CD4-positive, alpha-beta memory T cell (primary cell): ENCODE measurements at regions of chr15 and their contacts with region 1.

Region 1: DNA sequence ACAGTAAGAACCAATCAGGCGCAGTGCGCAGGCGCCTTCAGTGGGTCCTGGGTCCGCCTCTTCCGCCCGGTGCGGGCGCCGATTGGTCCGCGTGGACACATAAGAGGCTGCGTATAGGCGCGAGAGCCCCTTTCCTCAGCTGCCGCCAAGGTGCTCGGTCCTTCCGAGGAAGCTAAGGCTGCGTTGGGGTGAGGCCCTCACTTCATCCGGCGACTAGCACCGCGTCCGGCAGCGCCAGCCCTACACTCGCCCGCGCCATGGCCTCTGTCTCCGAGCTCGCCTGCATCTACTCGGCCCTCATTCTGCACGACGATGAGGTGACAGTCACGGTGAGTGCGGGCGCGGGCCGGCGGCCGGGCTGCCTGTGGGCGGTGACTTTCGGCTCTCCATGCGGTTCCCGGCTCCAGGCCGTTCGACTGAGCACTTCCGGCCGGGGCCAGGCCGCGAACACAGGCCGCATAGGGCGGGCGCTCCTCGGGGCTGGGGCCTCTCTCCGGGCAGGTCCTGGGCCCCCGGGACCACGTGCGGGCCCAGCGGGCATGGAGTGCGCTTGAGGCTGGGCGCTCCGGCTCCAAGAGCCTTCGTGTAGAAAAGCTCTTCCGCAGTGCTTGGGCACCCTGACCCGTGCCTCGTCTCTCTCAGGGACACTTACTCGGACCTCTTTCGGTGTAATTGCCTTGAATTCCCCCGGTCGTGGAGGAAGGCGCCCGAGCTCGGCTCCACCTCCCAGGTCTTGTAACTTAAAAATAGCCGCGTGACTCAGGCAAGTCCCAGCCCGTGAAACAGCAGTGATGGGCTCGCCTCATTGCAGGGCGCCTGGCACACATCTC is at the start of gene RPLP1:
- DNase-seq: peak; percentile 96
- H3K4me3 ChIP-seq: peak within 1 kb of the TSS; percentile 78 to 91
- H3K4me3 Mint-ChIP-seq: peak within 1 kb of the TSS; percentile 94 to 100 (median 98)
- H3K27ac ChIP-seq: peak within 1 kb of the TSS; percentile 92
- H3K27ac Mint-ChIP-seq: peak within 1 kb of the TSS; percentile 94 to 99 (median 98)
- H3K4me1 ChIP-seq: peaks cover 36% of the 10 kb centered on the region
- H3K4me1 Mint-ChIP-seq: peaks cover 28 to 56% (median 37%) of the 10 kb centered on the region in 4 donors
- H3K27me3 ChIP-seq: no peaks in the 10 kb centered on the region
- H3K27me3 Mint-ChIP-seq: no peaks in the 10 kb centered on the region
- total RNA-seq, gene RPLP1: 2,753 to 2,900 TPM

Region 2: GRCh38 chr15:69058830-69059556 is 393.9 kb before region 1 on chr15:
- CTCF ChIA-PET with region 1: interaction called, 4 read pairs
- POLR2A ChIA-PET with region 1: no interaction called
- intact Hi-C with region 1: loop called (anchors 1 kb)
- DNase-seq: peak; percentile 59 to 66 (median 62)
- H3K4me3 ChIP-seq: no peak overlapping the region
- H3K4me3 Mint-ChIP-seq: peak overlapping the region in 5 of 8 donors; percentile 40 to 62 (median 56)
- H3K27ac ChIP-seq: no peak overlapping the region
- H3K27ac Mint-ChIP-seq: peak overlapping the region in 5 of 7 donors; percentile 19 to 81 (median 27)
- H3K4me1 ChIP-seq: peaks cover 34% of the 10 kb centered on the region
- H3K4me1 Mint-ChIP-seq: peaks cover 23 to 43% (median 31%) of the 10 kb centered on the region in 4 donors
- H3K27me3 ChIP-seq: no peaks in the 10 kb centered on the region
- H3K27me3 Mint-ChIP-seq: peaks cover 4 to 8% of the 10 kb centered on the region in 2 donors

Region 3: DNA sequence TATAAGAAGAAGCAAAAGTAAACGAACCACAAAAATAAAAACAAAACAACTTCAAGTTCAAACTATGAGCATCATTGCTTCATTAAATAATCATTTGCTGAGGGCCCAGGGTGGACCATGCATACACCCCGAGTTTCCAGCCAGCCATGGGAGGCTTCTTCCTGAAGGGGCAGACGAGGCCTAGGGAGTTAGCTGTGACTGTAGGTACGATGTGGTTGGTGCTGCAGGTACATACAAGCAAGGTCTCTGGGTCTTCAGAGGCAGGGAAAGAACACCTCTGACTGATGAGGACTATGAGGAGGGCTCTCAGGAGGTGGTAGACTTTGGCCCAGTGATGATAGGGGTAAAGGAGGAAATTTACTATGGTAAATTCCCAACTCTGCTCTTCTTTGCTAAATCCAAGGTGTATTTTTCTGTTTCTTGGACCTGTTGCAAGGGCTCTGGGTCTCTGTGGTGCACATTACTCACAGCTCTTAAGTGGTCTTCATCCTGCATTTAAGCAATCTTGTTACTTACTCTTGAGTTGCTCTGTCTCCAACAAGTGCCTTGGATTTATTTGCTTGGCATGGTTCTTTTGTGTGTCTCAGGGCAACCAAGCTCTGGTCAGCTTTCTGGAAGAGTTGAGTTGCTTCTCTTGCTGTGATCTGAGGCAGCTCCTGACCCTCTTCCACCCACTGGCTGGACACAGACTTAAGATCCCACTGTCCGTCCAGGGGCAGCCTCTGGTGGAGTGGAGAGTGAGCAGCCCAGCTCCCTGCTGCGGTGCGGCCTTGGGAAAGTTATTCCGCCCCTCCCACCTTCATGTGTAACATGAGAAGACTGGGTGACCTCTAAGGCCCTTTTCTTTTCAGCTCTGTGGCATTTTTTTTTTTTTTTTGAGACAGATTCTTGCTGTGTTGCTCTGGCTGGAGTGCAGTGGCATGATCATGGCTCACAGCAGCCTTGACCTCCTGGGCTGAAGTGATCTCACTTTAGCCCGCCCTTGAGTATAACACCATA is 94.8 kb before region 1 on chr15:
- CTCF ChIA-PET with region 1: no interaction called
- POLR2A ChIA-PET with region 1: no interaction called
- intact Hi-C with region 1: no loop called
- DNase-seq: no peak
- H3K4me3 ChIP-seq: no peak overlapping the region
- H3K4me3 Mint-ChIP-seq: no peak overlapping the region
- H3K27ac ChIP-seq: no peak overlapping the region
- H3K27ac Mint-ChIP-seq: no peak overlapping the region
- H3K4me1 ChIP-seq: no peaks in the 10 kb centered on the region
- H3K4me1 Mint-ChIP-seq: no peaks in the 10 kb centered on the region
- H3K27me3 ChIP-seq: no peaks in the 10 kb centered on the region
- H3K27me3 Mint-ChIP-seq: peaks cover 1 to 12% of the 10 kb centered on the region in 2 donors

Region 4: DNA sequence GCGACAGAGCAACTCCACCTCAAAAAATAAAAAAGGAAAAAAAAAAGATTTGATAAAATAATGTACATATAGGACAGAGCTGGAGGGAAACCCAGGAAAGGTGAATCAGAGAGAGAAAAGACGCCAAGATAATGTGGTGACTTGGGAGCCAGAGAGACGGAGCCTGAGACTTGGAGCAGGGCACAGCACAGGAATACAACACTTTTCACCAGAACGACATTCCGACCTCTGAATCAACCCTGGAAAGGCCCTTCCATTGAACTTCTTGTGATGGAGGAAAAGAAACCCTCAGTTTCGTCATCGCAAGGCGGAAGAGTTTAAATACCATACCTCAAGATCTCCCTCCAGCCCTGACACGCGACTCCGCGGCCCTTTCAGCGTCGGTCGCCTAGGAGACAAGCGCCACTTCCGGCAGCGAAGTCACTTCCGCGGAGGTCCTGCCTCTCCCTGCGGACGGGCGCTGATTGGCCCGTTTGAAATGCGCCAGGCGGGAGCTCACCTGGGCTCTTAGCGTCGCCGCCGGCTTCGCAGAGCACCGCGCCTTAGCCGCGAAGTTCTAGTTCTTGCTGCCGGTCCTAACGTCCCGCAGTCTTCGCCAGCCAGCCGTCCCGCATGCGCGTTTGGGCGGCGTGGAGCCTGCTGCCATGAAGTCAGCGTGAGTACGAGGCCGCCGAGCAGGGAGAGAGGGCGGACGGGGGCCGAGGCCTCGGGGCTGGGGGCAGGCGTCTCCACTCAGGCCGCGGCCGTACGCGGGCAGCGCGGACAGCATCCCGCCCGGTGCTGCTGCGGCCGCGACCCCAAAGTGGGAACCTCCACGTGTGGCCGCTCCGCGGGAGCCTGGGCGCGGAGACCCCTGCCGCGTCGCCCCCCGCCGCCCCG is 38.8 kb before region 1 on chr15 and contains the start of gene KIF23:
- CTCF ChIA-PET with region 1: interaction called, 6 read pairs
- POLR2A ChIA-PET with region 1: interaction called, 89 read pairs
- intact Hi-C with region 1: loop called (anchors 5 kb)
- DNase-seq: peak; percentile 90 to 95 (median 91)
- H3K4me3 ChIP-seq: peak within 1 kb of the TSS in 1 of 2 donors; percentile 58
- H3K4me3 Mint-ChIP-seq: peak within 1 kb of the TSS; percentile 85 to 93 (median 86)
- H3K27ac ChIP-seq: peak within 1 kb of the TSS; percentile 37
- H3K27ac Mint-ChIP-seq: peak within 1 kb of the TSS; percentile 48 to 91 (median 74)
- H3K4me1 ChIP-seq: peaks cover 8% of the 10 kb centered on the region
- H3K4me1 Mint-ChIP-seq: peaks cover 6 to 15% (median 12%) of the 10 kb centered on the region in 4 donors
- H3K27me3 ChIP-seq: no peaks in the 10 kb centered on the region
- H3K27me3 Mint-ChIP-seq: peaks cover 5 to 17% of the 10 kb centered on the region in 2 donors
- total RNA-seq, gene KIF23: 0.20 TPM in 1 of 2 experiments, not detected in the other

Region 5: DNA sequence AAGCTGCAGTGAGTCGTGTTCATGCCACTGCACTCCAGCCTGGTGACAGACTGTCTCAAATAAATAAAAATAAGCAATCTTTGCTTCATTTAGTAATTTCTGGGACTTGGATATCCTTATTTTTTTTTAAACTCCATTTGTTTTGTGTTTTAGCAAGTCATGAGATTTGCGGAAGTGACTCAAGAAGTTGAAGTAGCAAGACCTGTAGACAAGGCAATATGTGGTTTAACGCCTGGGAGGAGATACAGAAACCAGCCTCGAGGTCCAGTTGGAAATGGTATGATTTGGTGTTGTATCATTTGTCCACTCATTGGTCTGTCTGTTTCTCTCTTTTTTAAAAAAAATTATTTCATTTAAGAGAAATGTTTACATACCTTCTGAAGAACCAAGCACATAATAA is 16.9 kb before region 1 on chr15:
- CTCF ChIA-PET with region 1: interaction called, 5 read pairs
- POLR2A ChIA-PET with region 1: interaction called, 39 read pairs
- intact Hi-C with region 1: no loop called
- DNase-seq: no peak
- H3K4me3 ChIP-seq: no peak overlapping the region
- H3K4me3 Mint-ChIP-seq: no peak overlapping the region
- H3K27ac ChIP-seq: no peak overlapping the region
- H3K27ac Mint-ChIP-seq: no peak overlapping the region
- H3K4me1 ChIP-seq: no peaks in the 10 kb centered on the region
- H3K4me1 Mint-ChIP-seq: no peaks in the 10 kb centered on the region
- H3K27me3 ChIP-seq: no peaks in the 10 kb centered on the region
- H3K27me3 Mint-ChIP-seq: no peaks in the 10 kb centered on the region

Region 6: DNA sequence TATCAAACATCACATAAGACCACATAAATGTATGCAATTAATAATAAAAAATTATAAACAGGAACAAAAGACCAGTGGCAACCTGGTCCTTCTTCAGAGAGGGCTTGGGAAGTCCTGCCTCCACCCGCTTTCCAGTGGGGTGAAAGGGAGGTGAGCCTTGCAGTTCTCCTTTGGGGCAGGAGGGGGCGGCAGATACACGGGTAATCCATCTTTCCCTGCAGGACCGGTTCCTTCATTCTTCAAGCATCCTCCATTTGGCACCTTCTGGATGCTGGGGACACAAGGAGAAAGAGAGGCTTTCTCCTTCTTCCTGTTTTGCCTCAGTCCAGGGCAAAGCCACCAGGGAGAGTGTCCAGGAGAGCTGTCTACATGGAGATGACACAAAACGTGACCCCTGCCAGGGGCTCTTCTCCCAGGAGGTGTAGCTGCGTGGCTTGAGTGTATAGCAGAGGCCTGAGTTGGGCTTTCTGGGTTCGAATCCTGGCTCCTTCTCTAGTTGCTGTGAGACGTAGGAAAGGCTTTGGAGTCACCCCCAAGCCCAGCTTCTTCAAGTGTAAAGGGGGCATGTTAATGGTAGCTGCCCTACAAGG is 23.0 kb after region 1 on chr15:
- CTCF ChIA-PET with region 1: interaction called, 10 read pairs
- POLR2A ChIA-PET with region 1: interaction called, 488 read pairs
- intact Hi-C with region 1: no loop called
- DNase-seq: peak; percentile 64 to 73 (median 69)
- H3K4me3 ChIP-seq: no peak overlapping the region
- H3K4me3 Mint-ChIP-seq: no peak overlapping the region
- H3K27ac ChIP-seq: no peak overlapping the region
- H3K27ac Mint-ChIP-seq: no peak overlapping the region
- H3K4me1 ChIP-seq: peaks cover 4% of the 10 kb centered on the region
- H3K4me1 Mint-ChIP-seq: peaks cover 0 to 4% (median under 1%) of the 10 kb centered on the region in 4 donors
- H3K27me3 ChIP-seq: no peaks in the 10 kb centered on the region
- H3K27me3 Mint-ChIP-seq: peaks cover 0 to 1% of the 10 kb centered on the region in 2 donors